ENCODE measurements at regions of chr1 and their contacts with region 1.

Region 1: DNA sequence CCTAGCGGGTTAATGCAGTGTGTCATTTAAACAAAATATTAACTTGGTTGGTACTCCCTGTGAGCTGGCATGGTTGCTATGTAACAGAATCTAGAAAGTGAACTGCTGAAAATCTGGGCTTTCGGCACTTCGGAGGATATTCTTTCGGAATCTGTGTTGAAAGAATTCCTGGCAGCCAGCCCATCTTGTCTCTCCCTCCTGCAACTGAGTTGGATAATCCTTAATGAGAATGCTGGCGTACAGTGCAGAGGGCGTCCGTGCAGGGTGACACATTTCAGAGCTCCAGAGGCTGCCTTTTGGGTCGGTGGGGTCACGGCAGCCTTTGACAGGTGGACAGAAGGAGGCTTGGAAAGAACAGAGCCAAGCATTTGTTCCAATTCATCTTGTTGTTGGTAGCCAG is 3.7 kb downstream of the KAZN start:
- DNase-seq: no peak
- ATAC-seq: no peak
- H3K4me3 ChIP-seq: no peak overlapping the region
- H3K27ac ChIP-seq: no peak overlapping the region
- H3K4me1 ChIP-seq: peaks cover 3% of the 10 kb centered on the region; the same call in 1 of the 2 replicates
- H3K27me3 ChIP-seq: 0 out of 2 replicates have a peak, but pooled peaks cover 8% of the 10 kb centered on the region
- CTCF ChIP-seq: no peak

Region 2: DNA sequence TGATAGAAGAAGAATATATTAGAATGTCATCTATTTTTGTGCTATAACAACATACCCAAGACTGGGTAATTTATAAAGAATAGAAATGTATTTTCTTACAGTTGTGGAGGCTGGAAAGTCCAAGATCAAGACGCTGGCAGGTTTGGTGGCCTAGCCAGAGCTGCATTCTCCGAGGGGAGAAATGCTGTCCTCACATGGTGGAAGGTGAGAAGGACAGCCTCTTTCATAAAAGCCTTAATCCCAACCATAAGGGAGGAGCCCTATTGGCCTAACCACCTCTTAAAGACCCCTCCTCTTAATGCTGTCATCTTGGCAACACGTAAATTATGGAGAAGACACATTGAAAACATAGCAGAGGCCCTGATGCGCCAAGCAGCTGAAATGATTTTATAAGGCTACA is 63.8 kb before region 1 on chr1:
- CTCF ChIA-PET with region 1: no interaction called
- POLR2A ChIA-PET with region 1: no interaction called
- intact Hi-C with region 1: no loop called
- DNase-seq: peak; percentile 19
- ATAC-seq: peak; percentile 20; the same call in 1 of the 2 replicates
- H3K4me3 ChIP-seq: no peak overlapping the region
- H3K27ac ChIP-seq: no peak overlapping the region
- H3K4me1 ChIP-seq: peaks cover 11% of the 10 kb centered on the region
- H3K27me3 ChIP-seq: no peaks in the 10 kb centered on the region
- CTCF ChIP-seq: peak; percentile 49

Region 3: DNA sequence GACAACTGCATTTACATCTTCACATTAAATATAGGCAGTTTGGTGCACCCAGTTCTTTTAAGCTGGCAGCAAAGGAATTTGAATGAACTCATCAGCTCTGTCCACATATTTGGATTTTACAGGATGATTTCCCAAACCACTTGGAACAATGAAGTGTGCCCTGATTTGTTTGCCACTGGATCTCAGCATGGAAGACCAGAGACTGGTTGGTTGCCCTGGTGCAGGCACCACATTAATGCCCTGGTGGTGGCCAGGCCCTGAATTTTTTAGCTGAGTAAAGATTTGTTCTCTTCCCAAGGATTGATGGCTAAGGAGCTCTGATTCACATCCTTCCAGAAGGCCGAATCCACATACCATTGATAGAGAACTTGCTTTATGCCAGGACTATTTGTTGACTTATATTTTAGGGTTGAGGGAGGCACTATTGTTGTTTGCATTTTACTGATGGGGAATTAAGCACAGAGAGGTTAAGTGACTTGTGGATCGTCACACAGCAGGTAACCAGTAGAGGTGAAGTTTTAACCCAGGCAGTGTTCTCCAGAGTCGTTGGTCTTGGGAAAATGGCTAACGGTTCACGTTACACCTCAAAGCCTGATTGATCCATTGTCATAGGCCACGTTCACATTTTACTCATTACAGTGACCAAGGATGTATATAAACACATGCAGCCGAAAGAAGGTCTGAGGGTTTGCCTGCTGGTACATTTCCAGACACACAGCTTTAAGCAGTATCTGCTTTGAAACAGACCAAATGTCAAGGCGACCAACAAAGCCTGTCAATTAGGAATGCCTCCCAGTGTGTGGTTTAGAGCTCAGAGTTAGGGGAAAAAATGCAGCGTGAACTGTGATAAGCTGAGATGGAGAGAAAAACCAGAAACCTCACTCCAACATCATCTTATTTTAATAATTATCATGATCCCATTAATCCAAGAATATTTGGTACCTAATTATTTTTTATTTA is 47.0 kb after region 1 on chr1:
- CTCF ChIA-PET with region 1: no interaction called
- POLR2A ChIA-PET with region 1: no interaction called
- intact Hi-C with region 1: no loop called
- DNase-seq: peak; percentile 76
- ATAC-seq: peak; percentile 62
- H3K4me3 ChIP-seq: no peak overlapping the region
- H3K27ac ChIP-seq: peak overlapping the region; percentile 60
- H3K4me1 ChIP-seq: peaks cover 41% of the 10 kb centered on the region
- H3K27me3 ChIP-seq: no peaks in the 10 kb centered on the region
- CTCF ChIP-seq: no peak

Region 4: GRCh38 chr1:14733048-14733778 is 131.1 kb after region 1 on chr1:
- CTCF ChIA-PET with region 1: no interaction called
- POLR2A ChIA-PET with region 1: no interaction called
- intact Hi-C with region 1: loop called (anchors 10 kb)
- DNase-seq: no peak
- ATAC-seq: no peak
- H3K4me3 ChIP-seq: no peak overlapping the region
- H3K27ac ChIP-seq: no peak overlapping the region
- H3K4me1 ChIP-seq: peaks cover 24% of the 10 kb centered on the region
- H3K27me3 ChIP-seq: no peaks in the 10 kb centered on the region
- CTCF ChIP-seq: no peak

Region 5: GRCh38 chr1:15028102-15028501 is 426.0 kb after region 1 on chr1:
- CTCF ChIA-PET with region 1: no interaction called
- POLR2A ChIA-PET with region 1: no interaction called
- intact Hi-C with region 1: loop called (anchors 5 kb)
- DNase-seq: peak; percentile 52
- ATAC-seq: peak; percentile 54
- H3K4me3 ChIP-seq: no peak overlapping the region
- H3K27ac ChIP-seq: no peak overlapping the region
- H3K4me1 ChIP-seq: peaks cover 8% of the 10 kb centered on the region; the same call in 1 of the 2 replicates
- H3K27me3 ChIP-seq: no peaks in the 10 kb centered on the region
- CTCF ChIP-seq: no peak